ENCODE measurements at regions of chr19 and their contacts with region 1.

Region 1: GRCh38 chr19:50252111-50252886 is 48.9 kb downstream of the MYH14 start:
- DNase-seq: peak; percentile 25
- H3K4me3 ChIP-seq: no peak overlapping the region
- H3K27ac ChIP-seq: no peak overlapping the region
- H3K4me1 ChIP-seq: no peaks in the 10 kb centered on the region
- H3K27me3 ChIP-seq: no peaks in the 10 kb centered on the region
- CTCF ChIP-seq: peak; percentile 60 to 82
- POLR2A ChIP-seq: no peak

Region 2: DNA sequence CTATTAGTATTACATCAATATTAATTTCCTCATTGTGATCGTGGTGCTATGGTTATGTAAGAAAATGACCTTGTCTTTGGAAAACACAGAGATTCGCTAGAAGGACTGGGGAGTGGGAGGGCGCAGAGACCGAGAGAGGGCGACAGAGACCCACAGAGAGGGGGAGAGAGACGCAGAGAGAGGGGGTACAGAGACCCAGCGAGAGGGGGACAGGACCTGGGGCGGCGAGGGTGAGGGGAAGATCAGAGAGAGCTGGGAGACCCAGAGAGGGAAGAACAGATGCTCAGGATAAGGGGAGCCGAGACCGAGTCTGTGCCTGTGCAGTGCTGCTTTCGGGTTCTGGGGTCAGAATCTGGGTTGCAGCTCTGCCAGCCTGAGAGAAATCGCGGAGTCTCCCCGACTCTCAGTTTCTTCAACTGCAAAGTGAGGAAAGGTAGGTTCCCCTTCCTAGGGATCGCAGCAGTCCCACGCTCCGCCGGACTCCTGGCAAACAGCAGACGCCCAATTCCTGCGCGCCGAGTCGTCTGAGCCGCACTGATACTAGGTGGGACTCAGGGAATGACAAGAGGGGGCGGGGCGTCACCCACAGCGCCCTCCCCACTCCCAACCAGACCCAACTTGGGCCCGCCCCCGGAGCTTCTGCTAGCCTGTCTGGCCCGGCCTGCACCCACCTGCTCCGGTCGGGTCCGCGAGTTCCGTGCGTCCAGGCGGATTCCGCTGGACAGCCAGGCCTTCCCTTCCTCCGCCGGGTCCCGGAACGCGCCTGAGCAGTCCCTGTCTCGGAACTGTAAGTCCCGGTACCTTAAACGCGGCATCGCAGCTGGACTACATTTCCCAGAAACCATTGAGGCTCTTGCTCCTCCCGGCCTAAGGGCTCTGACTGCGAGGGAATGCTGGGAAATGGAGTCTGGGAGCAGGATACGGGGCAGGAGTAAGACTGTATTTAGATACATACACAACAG is 104.6 kb before region 1 on chr19:
- CTCF ChIA-PET with region 1: no interaction called
- POLR2A ChIA-PET with region 1: no interaction called
- dilution Hi-C with region 1: no loop called
- intact Hi-C with region 1: no loop called
- DNase-seq: peak; percentile 92
- H3K4me3 ChIP-seq: peak overlapping the region; percentile 3 to 56 (median 50)
- H3K27ac ChIP-seq: no peak overlapping the region
- H3K4me1 ChIP-seq: no peaks in the 10 kb centered on the region
- H3K27me3 ChIP-seq: no peaks in the 10 kb centered on the region
- CTCF ChIP-seq: peak; percentile 42 to 52
- POLR2A ChIP-seq: no peak

Region 3: DNA sequence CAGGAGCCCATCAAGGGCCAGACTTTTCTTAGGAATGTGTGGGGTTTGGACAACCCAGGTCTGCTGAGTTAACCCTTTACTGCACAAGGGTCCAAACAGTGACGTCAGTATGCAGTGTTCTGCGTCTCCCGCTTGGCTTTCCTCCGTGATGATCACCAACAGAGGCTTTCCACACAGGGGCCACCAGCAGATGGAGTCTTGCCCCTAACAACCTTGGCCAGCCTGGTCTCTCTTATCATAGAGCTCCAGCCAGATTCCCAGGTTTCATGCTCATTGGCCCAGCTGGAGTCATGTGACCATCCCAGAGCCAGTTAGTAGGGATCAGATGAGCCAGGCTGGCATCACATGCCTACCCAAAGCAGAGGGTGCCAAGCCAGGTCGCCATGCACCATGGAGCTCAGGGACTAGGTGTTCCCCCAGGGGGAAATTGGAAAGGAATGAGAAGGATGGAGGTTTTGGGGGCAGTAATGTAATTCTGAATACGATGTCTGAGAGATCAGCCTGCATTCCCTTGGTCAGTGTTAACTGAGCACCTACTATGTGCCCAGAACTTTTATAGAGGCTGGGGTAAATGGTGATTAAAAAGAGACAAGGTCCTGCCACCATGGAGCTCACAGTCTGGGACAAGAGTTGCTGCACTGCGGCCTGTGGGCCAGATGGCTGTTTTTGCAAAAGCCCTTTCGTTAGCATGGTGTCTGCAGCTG is 12.3 kb after region 1 on chr19:
- CTCF ChIA-PET with region 1: interaction called, 19 read pairs
- POLR2A ChIA-PET with region 1: no interaction called
- dilution Hi-C with region 1: no loop called
- intact Hi-C with region 1: no loop called
- DNase-seq: peak; percentile 5
- H3K4me3 ChIP-seq: no peak overlapping the region
- H3K27ac ChIP-seq: no peak overlapping the region
- H3K4me1 ChIP-seq: no peaks in the 10 kb centered on the region
- H3K27me3 ChIP-seq: no peaks in the 10 kb centered on the region
- CTCF ChIP-seq: no peak
- POLR2A ChIP-seq: no peak

Region 4: DNA sequence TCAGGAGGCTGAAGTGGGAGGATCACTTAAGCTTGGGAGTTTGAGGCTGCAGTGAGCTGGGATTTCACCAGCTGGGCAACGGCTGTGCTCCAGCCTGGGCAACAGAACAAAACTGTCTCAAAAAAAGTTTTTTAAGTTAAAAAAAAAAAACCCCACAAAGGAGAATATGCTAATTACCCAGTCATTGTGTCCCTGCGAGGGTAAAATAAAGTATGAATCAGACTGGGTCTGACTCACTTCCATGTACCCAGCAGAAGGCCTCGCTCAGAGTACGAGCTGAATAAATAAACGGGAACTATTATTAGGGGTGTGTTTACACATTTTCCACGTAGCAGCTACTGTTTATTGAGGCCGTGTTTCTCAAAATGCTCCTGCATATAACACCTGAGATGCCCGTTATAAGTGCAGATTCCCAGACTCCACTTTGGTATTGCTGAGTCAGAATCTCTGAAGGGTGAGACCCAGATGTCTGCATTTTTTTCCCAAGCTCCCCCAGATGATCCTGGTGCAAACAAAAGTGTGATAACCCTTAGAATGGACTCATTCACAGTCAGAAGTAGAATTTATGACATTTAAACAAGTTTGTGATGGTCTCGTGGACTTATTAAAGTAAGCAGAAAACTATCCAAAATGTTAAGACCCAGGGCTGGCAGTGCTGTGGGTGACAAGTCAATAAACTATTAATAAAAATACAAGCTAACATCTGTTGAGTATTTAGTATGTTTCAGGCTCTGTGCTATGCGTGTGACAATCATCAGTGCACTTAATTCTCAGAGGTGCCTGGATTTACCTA is 48.7 kb after region 1 on chr19:
- CTCF ChIA-PET with region 1: interaction called, 18 read pairs
- POLR2A ChIA-PET with region 1: no interaction called
- dilution Hi-C with region 1: no loop called
- intact Hi-C with region 1: no loop called
- DNase-seq: peak; percentile 91
- H3K4me3 ChIP-seq: no peak overlapping the region
- H3K27ac ChIP-seq: peak overlapping the region; percentile 66
- H3K4me1 ChIP-seq: peaks cover 16% of the 10 kb centered on the region
- H3K27me3 ChIP-seq: peaks cover 0 to 3% of the 10 kb centered on the region in 2 experiments
- CTCF ChIP-seq: no peak
- POLR2A ChIP-seq: no peak

Region 5: DNA sequence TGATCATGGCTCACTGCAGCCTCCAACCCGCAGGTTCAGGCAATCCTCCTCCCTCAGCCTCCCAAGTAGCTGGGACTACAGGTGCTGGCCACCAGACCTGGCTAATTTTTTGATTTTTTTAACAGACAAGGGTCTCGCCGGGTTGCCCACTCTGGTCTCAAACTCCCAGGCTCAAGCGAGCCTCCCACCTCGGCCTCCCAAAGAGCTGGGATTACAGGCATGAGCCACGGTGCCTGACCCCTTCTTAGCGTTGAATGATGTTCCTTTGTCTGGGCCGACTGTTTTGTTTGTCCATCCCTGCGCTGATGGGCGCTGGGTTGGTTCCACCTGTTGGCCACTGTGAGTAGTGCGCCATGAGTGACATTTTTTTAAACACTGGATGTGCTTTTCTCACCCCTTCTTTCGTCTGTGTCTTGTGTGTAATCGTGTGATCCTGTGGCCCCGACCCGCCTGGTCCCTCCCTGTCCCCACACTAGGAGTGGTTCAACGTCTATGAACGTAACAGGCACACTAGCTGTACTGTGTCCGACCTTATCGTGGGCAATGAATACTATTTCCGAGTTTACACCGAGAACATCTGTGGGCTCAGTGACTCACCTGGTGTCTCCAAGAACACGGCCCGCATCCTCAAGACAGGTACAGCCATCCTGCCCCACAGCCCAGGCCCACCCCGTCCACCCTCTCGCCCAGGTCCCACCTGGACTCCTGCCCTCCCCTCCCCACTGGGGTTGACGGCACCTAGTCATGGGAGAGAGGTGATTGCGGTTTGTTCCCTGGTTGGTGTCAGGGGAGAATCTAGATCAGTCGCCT is 209.0 kb after region 1 on chr19:
- CTCF ChIA-PET with region 1: interaction called, 11 read pairs
- POLR2A ChIA-PET with region 1: no interaction called
- dilution Hi-C with region 1: no loop called
- intact Hi-C with region 1: loop called (anchors 1 kb)
- DNase-seq: peak; percentile 68
- H3K4me3 ChIP-seq: no peak overlapping the region
- H3K27ac ChIP-seq: no peak overlapping the region
- H3K4me1 ChIP-seq: no peaks in the 10 kb centered on the region
- H3K27me3 ChIP-seq: no peaks in the 10 kb centered on the region
- CTCF ChIP-seq: peak; percentile 81 to 82
- POLR2A ChIP-seq: no peak

Measured in endothelial cell of umbilical vein (primary cell).